Right ventricle myocardium inferior (tissue), 1 donor: ENCODE measurements at regions of chr18 and their contacts with region 1.

Region 1: DNA sequence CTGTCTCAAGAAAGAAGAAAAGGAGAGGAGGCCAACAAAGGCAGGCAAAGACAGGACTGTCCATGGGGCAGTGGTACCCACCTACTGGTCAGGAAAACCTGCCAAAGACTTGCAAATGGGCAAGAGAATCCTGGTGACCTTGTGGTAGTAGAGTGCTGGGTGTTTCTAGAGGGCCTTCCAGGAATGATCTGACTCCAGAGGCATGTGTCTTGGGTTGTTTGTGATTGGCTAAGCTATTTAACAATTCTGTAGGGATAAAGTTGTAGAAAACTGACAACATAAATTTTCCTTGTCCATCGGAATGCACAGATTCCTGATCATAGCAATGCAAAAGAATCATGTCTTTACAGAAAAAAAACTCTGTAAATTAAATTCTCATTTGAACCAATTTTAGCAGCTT is 68.5 kb upstream of the ZNF532 start:
- DNase-seq: no peak
- ATAC-seq: no peak

Region 2: DNA sequence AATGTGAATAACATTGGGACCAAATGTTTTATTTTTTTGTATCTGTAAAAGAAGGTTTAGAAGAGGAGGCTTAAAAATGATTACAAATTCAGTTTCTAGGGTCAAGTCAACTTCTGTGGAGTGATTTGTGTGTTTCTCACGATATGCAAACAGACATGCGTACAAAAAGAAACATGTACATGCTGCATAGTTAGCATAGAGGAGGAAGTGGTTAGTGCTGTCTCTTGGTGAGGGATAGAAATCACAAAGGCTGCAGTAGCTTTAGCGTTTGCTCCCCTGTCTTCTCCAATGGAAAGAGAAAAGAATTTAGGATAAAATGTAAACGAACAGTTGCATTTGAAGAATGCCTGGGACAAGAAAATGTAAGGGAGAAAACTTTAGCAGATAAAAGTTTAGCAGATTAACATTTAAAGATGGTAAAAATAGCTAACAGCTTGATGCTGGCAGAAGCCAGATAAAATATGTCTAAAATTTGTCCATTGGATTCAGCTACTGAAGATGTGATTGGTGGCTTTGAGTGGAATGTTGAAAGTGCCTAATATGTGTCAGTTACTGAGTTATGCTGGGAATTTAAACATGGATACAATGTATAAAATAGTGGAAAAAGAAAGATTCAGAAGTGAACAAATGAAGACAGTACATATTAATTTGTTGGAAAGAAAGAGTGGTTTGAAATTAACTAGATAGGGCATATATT is 80.0 kb before region 1 on chr18:
- intact Hi-C with region 1: no loop called
- DNase-seq: no peak
- ATAC-seq: no peak

Region 3: DNA sequence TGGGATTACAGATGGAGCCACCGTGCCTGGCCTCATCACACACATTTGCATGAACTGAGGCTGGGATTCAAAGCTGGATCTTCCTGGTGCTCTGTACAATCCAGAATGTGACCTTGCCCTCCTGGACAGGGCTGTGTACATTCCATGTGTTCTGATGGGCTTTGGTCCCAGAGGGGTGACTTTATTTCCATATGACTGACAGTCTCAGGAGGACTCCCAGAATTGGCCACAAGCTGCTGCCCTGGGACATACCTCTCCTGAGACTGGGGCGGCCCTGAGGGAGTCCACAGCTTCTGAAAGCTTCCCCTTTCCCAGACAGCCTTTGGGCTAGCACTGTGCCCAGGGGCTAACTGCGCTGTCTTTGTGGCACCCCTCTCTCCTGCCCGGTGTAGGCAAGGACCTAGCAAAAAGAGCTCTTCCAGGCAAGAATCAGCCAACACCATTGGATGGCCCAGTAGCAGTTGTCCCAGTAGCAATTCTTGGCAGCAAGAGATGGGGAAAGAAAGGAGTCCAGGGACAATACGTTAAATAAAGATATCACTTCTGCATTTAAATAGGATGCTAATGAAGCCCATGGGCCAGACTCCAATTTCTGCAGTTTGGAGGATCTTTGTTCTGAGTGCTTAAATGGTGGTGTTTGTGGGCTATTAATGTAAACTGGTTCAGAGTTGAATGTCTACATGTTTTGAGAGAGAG is 42.1 kb after region 1 on chr18:
- intact Hi-C with region 1: loop called (anchors 5 kb)
- DNase-seq: no peak
- ATAC-seq: peak; percentile 37